Heart right ventricle (tissue), 16 donors: ENCODE measurements at regions of chr18 and their contacts with region 1.

Region 1: DNA sequence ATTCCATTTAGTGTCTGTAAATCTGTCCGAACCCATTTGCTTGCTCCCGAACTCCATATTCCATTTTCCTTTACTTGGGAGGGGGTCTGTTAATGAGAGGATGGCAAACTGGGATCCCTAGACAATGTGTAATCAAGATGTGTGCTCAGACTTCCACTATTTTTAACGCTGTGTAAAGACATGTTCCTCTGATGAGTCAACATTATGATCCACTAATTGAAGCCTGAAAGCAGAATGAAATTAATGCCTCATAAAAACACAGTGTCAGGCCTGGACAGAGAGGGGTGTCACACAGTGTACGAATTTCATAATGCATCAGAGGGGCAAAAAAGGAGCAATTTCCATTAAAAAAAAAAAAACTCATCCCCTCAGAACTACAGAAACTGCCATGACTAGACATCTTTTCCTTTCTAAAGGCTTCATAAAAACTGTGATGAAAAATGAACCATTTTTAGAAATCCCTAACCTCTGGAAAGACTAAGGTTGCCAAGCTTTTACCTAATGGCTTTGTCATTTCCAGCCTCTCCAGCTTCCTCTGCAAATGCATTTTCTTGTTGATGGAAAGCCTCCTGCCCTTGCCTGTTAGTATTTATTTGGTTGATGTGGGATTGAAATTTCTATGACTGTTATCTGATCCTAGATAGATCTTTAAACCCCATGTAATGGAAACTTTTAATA is 209.2 kb upstream of the DCC start:
- DNase-seq: no peak
- ATAC-seq: no peak
- H3K4me3 ChIP-seq: no peak overlapping the region
- H3K27ac ChIP-seq: no peak overlapping the region
- H3K4me1 ChIP-seq: no peaks in the 10 kb centered on the region
- H3K27me3 ChIP-seq: no peaks in the 10 kb centered on the region
- CTCF ChIP-seq: no peak

Region 2: DNA sequence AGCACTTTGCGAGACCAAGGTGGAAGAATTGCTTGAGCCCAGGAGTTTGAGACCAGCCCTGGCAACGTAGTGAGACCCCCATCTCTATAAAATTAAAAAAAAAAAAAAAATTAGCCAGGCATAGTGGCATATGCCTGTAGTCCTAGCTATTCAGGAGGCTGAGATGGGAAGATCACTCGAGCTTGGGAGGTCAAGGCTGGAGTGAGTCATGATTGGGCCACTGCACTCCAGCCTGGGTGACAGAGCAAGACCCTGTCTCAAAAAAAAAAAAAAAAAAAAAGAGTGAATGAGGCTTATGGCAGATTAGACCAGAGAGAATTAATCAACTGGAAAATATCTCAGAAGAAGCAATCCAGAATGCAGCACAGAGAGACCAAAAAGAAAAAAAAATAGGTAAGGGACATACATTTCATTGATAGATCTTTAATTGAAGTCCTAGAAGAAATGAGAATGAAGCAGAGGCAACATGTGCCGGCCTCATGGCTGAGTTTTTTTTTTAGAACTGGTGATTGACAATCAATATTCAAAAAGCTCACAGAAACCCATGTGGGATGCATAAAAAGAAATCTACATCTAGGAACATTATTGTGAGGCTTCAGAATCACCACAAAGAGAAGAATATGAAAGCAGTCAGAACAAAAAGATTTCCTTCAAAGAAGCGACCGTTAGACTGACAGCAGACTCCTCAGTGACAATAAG is 1195.1 kb before region 1 on chr18:
- intact Hi-C with region 1: loop called in 1 of 10 experiments (anchors 5 kb)
- DNase-seq: no peak
- ATAC-seq: no peak
- H3K4me3 ChIP-seq: no peak overlapping the region
- H3K27ac ChIP-seq: no peak overlapping the region
- H3K4me1 ChIP-seq: no peaks in the 10 kb centered on the region
- H3K27me3 ChIP-seq: no peaks in the 10 kb centered on the region
- CTCF ChIP-seq: no peak